Mammary epithelial cell (primary cell): ENCODE measurements at regions of chr1 and their contacts with region 1.

Region 1: DNA sequence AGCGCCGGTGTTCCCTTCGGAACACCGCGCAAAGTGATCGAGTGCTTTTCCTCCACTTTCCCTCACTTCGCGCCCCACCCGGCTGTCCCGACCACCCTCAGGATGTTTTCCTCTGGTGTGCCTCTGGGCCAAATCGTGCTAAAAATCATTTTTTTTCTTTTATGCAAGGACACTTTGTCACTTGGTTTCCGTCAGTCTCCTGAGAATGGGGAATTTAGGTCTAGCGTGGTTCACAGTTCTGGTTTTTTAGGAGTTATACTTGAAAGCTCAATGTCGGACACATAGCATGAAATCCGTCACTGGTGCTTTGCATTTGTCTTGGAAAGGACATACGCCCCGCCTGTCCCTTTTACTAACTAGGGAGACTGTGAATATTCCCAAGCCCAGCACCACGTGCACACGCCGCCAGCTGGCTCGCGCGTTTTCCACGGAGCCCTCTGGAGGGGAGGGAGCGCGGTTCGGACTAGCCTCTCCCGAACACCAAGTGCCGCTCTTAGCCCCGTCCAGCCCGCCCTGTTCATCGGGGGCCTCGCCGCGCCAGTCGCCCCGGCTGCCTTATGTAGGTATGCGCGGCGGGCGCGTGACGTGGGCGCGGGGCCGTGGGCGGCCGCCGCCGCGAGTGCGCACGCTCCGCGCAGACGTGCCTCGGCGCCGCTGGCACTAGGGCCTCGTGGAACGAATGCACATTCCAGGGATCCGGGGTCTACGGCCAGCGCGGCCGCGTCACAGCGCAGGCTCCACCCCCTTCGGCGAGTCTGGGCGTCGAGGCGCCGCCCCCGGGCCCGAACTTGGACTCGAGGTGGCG is 572 bp upstream of the IRF2BP2 start:
- DNase-seq: peak; percentile 92
- H3K4me3 ChIP-seq: peak overlapping the region; percentile 46 to 49 (median 48)
- H3K27ac ChIP-seq: peak overlapping the region; percentile 99
- H3K4me1 ChIP-seq: peaks cover 44% of the 10 kb centered on the region
- H3K27me3 ChIP-seq: no peaks in the 10 kb centered on the region
- CTCF ChIP-seq: peak in 1 of 2 donors; percentile 24

Region 2: GRCh38 chr1:233406994-233407631 is 1203.4 kb before region 1 on chr1:
- CTCF ChIA-PET with region 1: interaction called, 18 read pairs
- dilution Hi-C with region 1: no loop called
- in situ Hi-C with region 1: no loop called
- intact Hi-C with region 1: no loop called
- DNase-seq: no peak
- H3K4me3 ChIP-seq: no peak overlapping the region
- H3K27ac ChIP-seq: no peak overlapping the region
- H3K4me1 ChIP-seq: no peaks in the 10 kb centered on the region
- H3K27me3 ChIP-seq: no peaks in the 10 kb centered on the region
- CTCF ChIP-seq: no peak

Region 3: GRCh38 chr1:234564642-234565037 is 45.9 kb before region 1 on chr1:
- CTCF ChIA-PET with region 1: no interaction called
- dilution Hi-C with region 1: no loop called
- in situ Hi-C with region 1: no loop called
- intact Hi-C with region 1: loop called (anchors 1 kb)
- DNase-seq: peak; percentile 100
- H3K4me3 ChIP-seq: no peak overlapping the region
- H3K27ac ChIP-seq: peak overlapping the region; percentile 99
- H3K4me1 ChIP-seq: peaks cover 22% of the 10 kb centered on the region
- H3K27me3 ChIP-seq: no peaks in the 10 kb centered on the region
- CTCF ChIP-seq: no peak

Region 4: DNA sequence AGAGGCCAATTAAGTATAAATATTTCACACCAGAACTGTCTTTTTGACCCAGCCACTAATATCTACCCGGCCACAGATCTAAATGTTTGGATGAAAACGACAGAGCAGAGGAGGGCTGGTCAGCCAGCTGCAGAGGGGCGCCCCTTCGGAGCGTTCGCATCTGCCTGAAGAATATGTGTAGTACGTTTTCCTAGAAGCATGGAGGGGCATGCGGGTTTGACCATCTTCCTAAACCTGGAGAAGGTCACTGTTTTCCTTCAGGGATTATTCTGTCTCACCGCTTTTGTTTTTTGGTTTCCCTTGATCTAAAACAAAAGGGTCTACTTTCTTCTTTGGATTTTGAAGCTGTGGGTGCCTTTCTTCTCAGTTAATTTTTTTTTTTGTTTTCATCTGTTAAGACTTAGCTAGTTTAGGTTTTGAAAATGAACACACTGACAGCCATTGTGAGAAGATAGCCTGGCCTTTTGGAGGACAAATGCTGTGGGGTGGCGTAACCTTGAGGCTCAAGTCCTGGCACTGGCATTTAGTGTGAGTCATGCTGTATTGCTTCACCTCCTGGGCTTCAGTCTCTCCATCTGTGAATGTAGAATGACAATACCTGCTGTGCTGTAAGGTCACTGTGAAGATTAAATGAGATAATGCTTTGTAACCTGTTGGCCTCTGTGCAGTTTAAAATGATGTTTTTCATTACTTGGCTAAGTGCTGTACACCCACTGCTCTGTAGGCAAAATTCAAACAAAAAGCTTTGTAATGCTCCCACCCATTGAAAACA is 73.5 kb after region 1 on chr1:
- CTCF ChIA-PET with region 1: no interaction called
- dilution Hi-C with region 1: no loop called
- in situ Hi-C with region 1: no loop called
- intact Hi-C with region 1: loop called (anchors 2 kb)
- DNase-seq: peak; percentile 85
- H3K4me3 ChIP-seq: no peak overlapping the region
- H3K27ac ChIP-seq: no peak overlapping the region
- H3K4me1 ChIP-seq: peaks cover 11% of the 10 kb centered on the region
- H3K27me3 ChIP-seq: no peaks in the 10 kb centered on the region
- CTCF ChIP-seq: no peak

Region 5: DNA sequence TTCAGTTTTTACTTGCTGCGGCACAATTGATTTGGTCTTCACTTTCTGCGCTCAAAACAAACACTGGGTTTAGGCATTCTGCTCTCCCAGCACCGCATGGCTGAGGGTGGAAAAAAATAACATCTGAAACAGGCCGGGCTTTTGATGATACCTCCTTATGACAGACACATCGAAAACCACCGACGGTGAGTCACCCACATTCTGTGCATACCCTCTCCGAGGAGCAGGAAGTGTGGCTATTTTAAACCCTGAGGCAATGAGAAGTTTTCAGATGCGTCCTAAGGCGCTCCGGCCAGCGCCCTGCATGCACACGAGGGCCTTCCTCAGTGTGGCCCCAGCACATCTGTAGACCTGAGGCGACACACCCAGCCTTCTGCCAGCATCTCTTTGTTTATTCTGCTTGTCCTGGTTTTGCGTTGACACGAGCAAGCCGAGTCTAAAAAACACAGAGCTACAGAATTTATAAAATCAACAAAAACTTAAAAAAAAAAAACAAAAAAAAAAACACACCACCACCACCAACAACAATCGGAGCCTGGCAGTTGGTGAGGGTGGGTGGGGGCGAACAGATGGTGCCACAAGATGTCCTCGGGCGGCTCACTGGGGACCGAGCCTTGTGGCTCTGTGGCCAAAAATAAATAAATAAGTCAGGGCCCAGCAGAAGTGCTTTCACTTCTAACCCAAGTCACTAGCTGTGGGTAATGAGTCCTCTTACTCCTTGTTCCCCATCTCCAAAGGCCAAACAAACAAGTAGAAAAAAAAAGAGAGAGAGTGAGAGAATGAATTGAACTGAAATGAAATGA is 162.0 kb after region 1 on chr1:
- CTCF ChIA-PET with region 1: no interaction called
- dilution Hi-C with region 1: no loop called
- in situ Hi-C with region 1: no loop called
- intact Hi-C with region 1: loop called (anchors 5 kb)
- DNase-seq: peak; percentile 98
- H3K4me3 ChIP-seq: no peak overlapping the region
- H3K27ac ChIP-seq: peak overlapping the region; percentile 62
- H3K4me1 ChIP-seq: peaks cover 13% of the 10 kb centered on the region
- H3K27me3 ChIP-seq: peaks cover 11% of the 10 kb centered on the region
- CTCF ChIP-seq: no peak

Region 6: GRCh38 chr1:234925440-234926263 is 315.1 kb after region 1 on chr1:
- CTCF ChIA-PET with region 1: no interaction called
- dilution Hi-C with region 1: no loop called
- in situ Hi-C with region 1: no loop called
- intact Hi-C with region 1: loop called (anchors 2 kb)
- DNase-seq: peak; percentile 99
- H3K4me3 ChIP-seq: no peak overlapping the region
- H3K27ac ChIP-seq: peak overlapping the region; percentile 60
- H3K4me1 ChIP-seq: peaks cover 16% of the 10 kb centered on the region
- H3K27me3 ChIP-seq: no peaks in the 10 kb centered on the region
- CTCF ChIP-seq: no peak

Region 7: GRCh38 chr1:235067263-235068172 is 457.0 kb after region 1 on chr1:
- CTCF ChIA-PET with region 1: no interaction called
- dilution Hi-C with region 1: no loop called
- in situ Hi-C with region 1: loop called (anchors 5 to 10 kb)
- intact Hi-C with region 1: loop called (anchors 1 kb)
- DNase-seq: peak; percentile 100
- H3K4me3 ChIP-seq: no peak overlapping the region
- H3K27ac ChIP-seq: peak overlapping the region; percentile 97
- H3K4me1 ChIP-seq: peaks cover 43% of the 10 kb centered on the region
- H3K27me3 ChIP-seq: no peaks in the 10 kb centered on the region
- CTCF ChIP-seq: peak in 1 of 2 donors; percentile 1